K562 (cell line): ENCODE measurements at regions of chr11 and their contacts with region 1.

Region 1: GRCh38 chr11:112213753-112214152 is 12.5 kb upstream of the PTS start:
- DNase-seq: no peak
- ATAC-seq: no peak
- H3K4me3 ChIP-seq: no peak overlapping the region
- H3K27ac ChIP-seq: no peak overlapping the region
- H3K4me1 ChIP-seq: no peaks in the 10 kb centered on the region
- H3K27me3 ChIP-seq: peaks cover 0 to 2% of the 10 kb centered on the region in 2 experiments; a peak in 2 of 5 replicates
- CTCF ChIP-seq: no peak
- EP300 ChIP-seq: no peak
- POLR2A ChIP-seq: no peak
- RAD21 ChIP-seq: no peak

Region 2: GRCh38 chr11:112200252-112200651 is 13.5 kb before region 1 on chr11:
- CTCF ChIA-PET with region 1: no interaction called
- POLR2A ChIA-PET with region 1: interaction called, 3 read pairs
- in situ Hi-C with region 1: no loop called
- intact Hi-C with region 1: loop called (anchors 1 kb)
- DNase-seq: no peak
- ATAC-seq: no peak
- H3K4me3 ChIP-seq: no peak overlapping the region
- H3K27ac ChIP-seq: no peak overlapping the region
- H3K4me1 ChIP-seq: no peaks in the 10 kb centered on the region
- H3K27me3 ChIP-seq: no peaks in the 10 kb centered on the region
- CTCF ChIP-seq: no peak
- EP300 ChIP-seq: no peak
- POLR2A ChIP-seq: no peak
- RAD21 ChIP-seq: no peak